Activated CD4-positive, alpha-beta T cell treated with anti-CD3 and anti-CD28 coated beads, Interleukin-2, amount 10 ng/mL, durations not matched to agents 24 days and 14 days (primary cell): ENCODE measurements at regions of chr17 and their contacts with region 1.

Region 1: GRCh38 chr17:67376737-67377487 is at the start of gene PITPNC1:
- DNase-seq: peak; percentile 96
- H3K4me3 Mint-ChIP-seq: peak within 1 kb of the TSS; percentile 92
- H3K27ac Mint-ChIP-seq: peak within 1 kb of the TSS; percentile 93
- H3K4me1 Mint-ChIP-seq: peaks cover 27% of the 10 kb centered on the region
- H3K27me3 Mint-ChIP-seq: no peaks in the 10 kb centered on the region
- total RNA-seq, gene PITPNC1: 18.7 and 22.3 TPM in 2 replicates

Region 2: GRCh38 chr17:67390646-67391384 is 13.9 kb after region 1 on chr17:
- intact Hi-C with region 1: loop called (anchors 1 kb)
- DNase-seq: peak; percentile 92
- H3K4me3 Mint-ChIP-seq: peak overlapping the region; percentile 70
- H3K27ac Mint-ChIP-seq: peak overlapping the region; percentile 90
- H3K4me1 Mint-ChIP-seq: peaks cover 46% of the 10 kb centered on the region
- H3K27me3 Mint-ChIP-seq: no peaks in the 10 kb centered on the region

Region 3: GRCh38 chr17:67441052-67441927 is 64.4 kb after region 1 on chr17:
- intact Hi-C with region 1: loop called (anchors 2 kb)
- DNase-seq: peak; percentile 90
- H3K4me3 Mint-ChIP-seq: peak overlapping the region; percentile 84
- H3K27ac Mint-ChIP-seq: peak overlapping the region; percentile 96
- H3K4me1 Mint-ChIP-seq: peaks cover 51% of the 10 kb centered on the region
- H3K27me3 Mint-ChIP-seq: no peaks in the 10 kb centered on the region

Region 4: DNA sequence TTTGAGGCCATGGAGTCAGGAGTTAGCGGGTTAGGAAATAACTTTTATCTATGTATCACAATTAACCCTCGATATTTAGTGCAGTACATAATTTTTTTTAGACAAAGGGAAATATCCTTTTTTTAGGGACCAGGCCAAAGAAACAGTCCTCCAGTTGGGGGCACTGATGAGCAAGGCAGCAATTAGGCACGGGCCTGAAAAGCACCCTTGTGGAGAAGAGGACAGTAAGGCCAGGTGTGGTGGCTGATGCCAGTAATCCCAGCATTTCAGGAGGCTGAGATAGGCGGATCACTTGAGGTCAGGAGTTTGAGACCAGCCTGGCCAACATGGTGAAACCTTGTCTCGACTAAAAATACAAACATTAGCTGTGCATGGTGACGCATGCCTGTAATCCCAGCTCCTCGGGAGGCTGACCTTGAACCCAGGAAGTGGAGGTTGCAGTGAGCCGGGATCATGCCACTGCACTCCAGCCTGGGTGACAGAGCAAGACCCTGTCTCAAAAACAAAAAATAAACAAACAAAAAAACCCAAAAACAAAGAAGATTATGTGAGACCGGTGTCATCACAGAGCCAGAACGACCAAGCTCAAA is 182.6 kb after region 1 on chr17:
- intact Hi-C with region 1: no loop called
- DNase-seq: no peak
- H3K4me3 Mint-ChIP-seq: no peak overlapping the region
- H3K27ac Mint-ChIP-seq: no peak overlapping the region
- H3K4me1 Mint-ChIP-seq: no peaks in the 10 kb centered on the region
- H3K27me3 Mint-ChIP-seq: no peaks in the 10 kb centered on the region

Region 5: GRCh38 chr17:67629971-67630320 is 253.0 kb after region 1 on chr17:
- intact Hi-C with region 1: loop called (anchors 2 kb)
- DNase-seq: peak; percentile 63
- H3K4me3 Mint-ChIP-seq: no peak overlapping the region
- H3K27ac Mint-ChIP-seq: no peak overlapping the region
- H3K4me1 Mint-ChIP-seq: peaks cover 4% of the 10 kb centered on the region
- H3K27me3 Mint-ChIP-seq: no peaks in the 10 kb centered on the region